ENCODE measurements at regions of chr17 and their contacts with region 1.

Region 1: GRCh38 chr17:80866147-80866793 is 125.4 kb upstream of the CHMP6 start:
- DNase-seq: peak; percentile 36 to 77 (median 62)
- ATAC-seq: peak; percentile 64
- H3K4me3 ChIP-seq: no peak overlapping the region
- H3K4me3 Mint-ChIP-seq: no peak overlapping the region
- H3K27ac ChIP-seq: no peak overlapping the region
- H3K27ac Mint-ChIP-seq: peak overlapping the region; percentile 51
- H3K4me1 ChIP-seq: peaks cover 28% of the 10 kb centered on the region
- H3K4me1 Mint-ChIP-seq: peaks cover 66% of the 10 kb centered on the region
- H3K27me3 ChIP-seq: no peaks in the 10 kb centered on the region
- H3K27me3 Mint-ChIP-seq: no peaks in the 10 kb centered on the region
- CTCF ChIP-seq: peak; percentile 73

Region 2: GRCh38 chr17:80805032-80805751 is 61.1 kb before region 1 on chr17:
- CTCF ChIA-PET with region 1: no interaction called
- POLR2A ChIA-PET with region 1: no interaction called
- intact Hi-C with region 1: no loop called
- DNase-seq: peak in 1 of 14 experiments; percentile 24
- ATAC-seq: no peak
- H3K4me3 ChIP-seq: no peak overlapping the region
- H3K4me3 Mint-ChIP-seq: no peak overlapping the region
- H3K27ac ChIP-seq: no peak overlapping the region
- H3K27ac Mint-ChIP-seq: no peak overlapping the region
- H3K4me1 ChIP-seq: no peaks in the 10 kb centered on the region
- H3K4me1 Mint-ChIP-seq: peaks cover 11% of the 10 kb centered on the region
- H3K27me3 ChIP-seq: no peaks in the 10 kb centered on the region
- H3K27me3 Mint-ChIP-seq: no peaks in the 10 kb centered on the region
- CTCF ChIP-seq: no peak

Region 3: DNA sequence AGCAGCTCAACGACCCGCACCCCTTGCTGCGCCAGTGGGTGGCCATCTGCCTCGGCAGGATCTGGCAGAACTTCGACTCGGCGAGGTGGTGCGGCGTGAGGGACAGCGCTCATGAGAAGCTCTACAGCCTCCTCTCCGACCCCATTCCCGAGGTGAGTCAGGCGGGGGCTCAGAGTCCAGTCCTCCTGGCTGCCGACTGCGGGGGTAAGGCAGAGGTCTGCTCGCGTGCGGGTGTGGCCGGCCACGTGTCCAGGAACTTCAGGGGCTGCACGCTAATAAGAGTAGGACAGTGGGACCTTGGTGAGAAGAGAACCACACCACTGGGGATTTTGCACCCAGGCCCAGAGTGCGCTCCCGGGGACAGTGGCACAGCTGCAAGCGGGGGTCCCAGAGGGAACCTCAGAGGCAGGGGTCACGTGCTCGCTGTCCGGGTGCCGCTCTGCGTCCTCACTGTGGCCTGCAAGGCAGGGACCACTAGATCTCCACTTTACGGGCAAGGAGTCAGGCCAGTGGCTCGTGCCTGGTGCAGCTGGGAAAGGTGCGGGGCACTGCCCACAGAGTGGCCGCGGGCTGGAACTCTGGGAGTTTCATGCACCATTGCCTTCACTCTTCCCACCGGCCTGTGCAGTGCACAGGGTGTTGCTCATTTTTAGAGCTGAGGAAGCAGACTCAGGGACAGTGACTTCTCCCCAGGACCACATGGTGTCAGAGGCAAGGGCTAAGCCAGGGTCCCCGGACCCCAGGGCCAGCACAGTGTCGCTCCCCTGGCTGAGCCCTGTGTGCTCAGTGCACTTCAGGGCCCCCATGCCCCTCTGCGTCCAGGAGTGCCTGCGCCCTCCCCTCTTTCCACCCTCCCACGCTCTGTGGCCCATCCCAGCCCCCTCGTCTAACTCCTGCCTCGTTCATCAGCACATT is 17.8 kb after region 1 on chr17:
- CTCF ChIA-PET with region 1: no interaction called
- POLR2A ChIA-PET with region 1: no interaction called
- intact Hi-C with region 1: loop called in 1 of 2 experiments (anchors 2 kb)
- DNase-seq: no peak
- ATAC-seq: no peak
- H3K4me3 ChIP-seq: no peak overlapping the region
- H3K4me3 Mint-ChIP-seq: no peak overlapping the region
- H3K27ac ChIP-seq: no peak overlapping the region
- H3K27ac Mint-ChIP-seq: no peak overlapping the region
- H3K4me1 ChIP-seq: peaks cover 7% of the 10 kb centered on the region
- H3K4me1 Mint-ChIP-seq: peaks cover 4% of the 10 kb centered on the region
- H3K27me3 ChIP-seq: no peaks in the 10 kb centered on the region
- H3K27me3 Mint-ChIP-seq: no peaks in the 10 kb centered on the region
- CTCF ChIP-seq: no peak

Region 4: DNA sequence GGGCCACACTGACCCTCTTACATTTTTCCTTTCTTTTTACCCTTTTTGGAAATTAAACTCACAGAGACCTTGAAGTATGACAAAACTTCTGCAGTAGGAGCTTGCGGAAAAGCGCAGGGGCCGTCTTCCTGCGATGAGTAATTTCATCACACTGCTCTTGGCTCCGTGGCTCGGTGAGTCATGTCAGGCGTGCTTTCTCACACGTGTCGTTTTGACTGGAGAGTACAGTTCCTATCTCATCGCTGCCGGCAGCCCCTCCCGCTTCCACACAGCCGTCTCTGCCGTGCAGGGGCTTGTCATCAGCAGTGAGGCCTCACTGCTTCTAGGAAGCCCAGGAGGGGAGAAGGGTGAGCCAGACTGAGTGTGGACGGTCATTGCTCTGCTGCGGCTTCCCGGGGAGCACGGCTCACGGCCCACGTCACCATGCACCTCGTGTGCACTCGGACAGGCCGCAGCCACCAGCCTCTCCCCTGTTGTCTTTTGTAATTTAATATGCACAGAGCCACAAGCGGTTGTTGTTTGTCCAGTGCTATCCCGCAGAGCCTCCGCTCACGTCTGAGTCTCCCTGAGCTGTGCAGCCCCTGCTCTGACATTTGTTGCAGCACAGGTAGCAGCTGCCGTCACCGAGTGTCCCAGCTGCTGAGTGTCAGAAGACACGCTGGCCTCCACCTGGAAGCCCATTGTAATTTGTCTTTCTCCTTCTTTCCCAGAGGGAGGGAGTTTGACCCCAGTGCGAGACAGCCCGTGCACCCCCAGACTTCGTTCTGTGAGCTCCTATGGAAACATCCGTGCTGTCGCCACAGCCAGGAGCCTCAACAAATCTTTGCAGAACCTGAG is 26.0 kb after region 1 on chr17:
- CTCF ChIA-PET with region 1: interaction called, 14 read pairs
- POLR2A ChIA-PET with region 1: no interaction called
- intact Hi-C with region 1: no loop called
- DNase-seq: peak; percentile 61 to 92 (median 80)
- ATAC-seq: peak; percentile 77
- H3K4me3 ChIP-seq: peak overlapping the region; percentile 37
- H3K4me3 Mint-ChIP-seq: peak overlapping the region; percentile 75
- H3K27ac ChIP-seq: peak overlapping the region; percentile 80 to 82
- H3K27ac Mint-ChIP-seq: peak overlapping the region; percentile 93
- H3K4me1 ChIP-seq: peaks cover 63% of the 10 kb centered on the region
- H3K4me1 Mint-ChIP-seq: peaks cover 50% of the 10 kb centered on the region
- H3K27me3 ChIP-seq: no peaks in the 10 kb centered on the region
- H3K27me3 Mint-ChIP-seq: no peaks in the 10 kb centered on the region
- CTCF ChIP-seq: no peak

Region 5: DNA sequence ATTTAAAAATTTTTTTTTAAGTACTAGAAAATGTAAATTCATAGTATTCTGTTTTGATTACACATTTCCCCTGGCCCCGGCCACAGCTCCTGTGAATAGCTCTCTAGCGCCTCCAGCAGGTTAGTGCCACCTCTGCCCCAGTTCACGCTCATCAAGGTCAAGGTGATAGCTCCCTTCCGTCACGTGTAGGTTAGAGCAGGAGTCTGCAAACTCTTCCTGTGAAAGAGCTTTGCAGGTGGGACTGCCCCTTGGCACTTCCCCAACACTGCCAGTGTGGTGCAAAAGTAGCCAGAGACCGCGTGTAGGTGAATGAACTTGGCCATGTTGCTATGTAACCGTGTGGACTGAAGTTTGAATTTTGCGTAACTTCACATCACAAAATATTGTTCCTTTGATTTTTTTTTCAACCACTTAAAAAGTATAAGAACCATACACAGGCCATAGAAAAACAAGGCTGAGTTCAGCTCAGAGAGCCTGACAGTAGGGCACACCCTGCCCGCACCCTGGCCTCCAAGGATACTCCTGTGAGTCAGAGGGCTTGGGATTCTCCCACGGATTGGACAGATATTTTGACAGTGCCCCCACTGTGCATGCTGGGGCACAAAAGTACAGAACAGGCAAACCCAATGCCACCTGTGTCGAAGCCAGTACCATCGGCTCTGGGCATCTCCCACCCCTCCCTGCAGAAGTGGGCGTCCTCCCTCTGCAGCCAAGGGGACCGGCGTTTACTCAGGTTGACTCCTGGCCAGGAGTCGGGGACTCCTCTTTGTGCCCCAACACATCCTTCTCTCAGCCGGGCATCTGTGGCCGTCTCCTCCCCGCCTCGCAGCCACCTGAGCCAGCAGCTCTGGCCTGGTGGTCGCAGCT is 33.4 kb after region 1 on chr17:
- CTCF ChIA-PET with region 1: interaction called, 13 read pairs
- POLR2A ChIA-PET with region 1: interaction called, 5 read pairs
- intact Hi-C with region 1: loop called (anchors 1 to 2 kb)
- DNase-seq: peak; percentile 70 to 89 (median 78)
- ATAC-seq: peak; percentile 95
- H3K4me3 ChIP-seq: no peak overlapping the region
- H3K4me3 Mint-ChIP-seq: no peak overlapping the region
- H3K27ac ChIP-seq: no peak overlapping the region
- H3K27ac Mint-ChIP-seq: peak overlapping the region; percentile 47
- H3K4me1 ChIP-seq: peaks cover 22% of the 10 kb centered on the region
- H3K4me1 Mint-ChIP-seq: peaks cover 30% of the 10 kb centered on the region
- H3K27me3 ChIP-seq: no peaks in the 10 kb centered on the region
- H3K27me3 Mint-ChIP-seq: no peaks in the 10 kb centered on the region
- CTCF ChIP-seq: peak; percentile 87

Region 6: DNA sequence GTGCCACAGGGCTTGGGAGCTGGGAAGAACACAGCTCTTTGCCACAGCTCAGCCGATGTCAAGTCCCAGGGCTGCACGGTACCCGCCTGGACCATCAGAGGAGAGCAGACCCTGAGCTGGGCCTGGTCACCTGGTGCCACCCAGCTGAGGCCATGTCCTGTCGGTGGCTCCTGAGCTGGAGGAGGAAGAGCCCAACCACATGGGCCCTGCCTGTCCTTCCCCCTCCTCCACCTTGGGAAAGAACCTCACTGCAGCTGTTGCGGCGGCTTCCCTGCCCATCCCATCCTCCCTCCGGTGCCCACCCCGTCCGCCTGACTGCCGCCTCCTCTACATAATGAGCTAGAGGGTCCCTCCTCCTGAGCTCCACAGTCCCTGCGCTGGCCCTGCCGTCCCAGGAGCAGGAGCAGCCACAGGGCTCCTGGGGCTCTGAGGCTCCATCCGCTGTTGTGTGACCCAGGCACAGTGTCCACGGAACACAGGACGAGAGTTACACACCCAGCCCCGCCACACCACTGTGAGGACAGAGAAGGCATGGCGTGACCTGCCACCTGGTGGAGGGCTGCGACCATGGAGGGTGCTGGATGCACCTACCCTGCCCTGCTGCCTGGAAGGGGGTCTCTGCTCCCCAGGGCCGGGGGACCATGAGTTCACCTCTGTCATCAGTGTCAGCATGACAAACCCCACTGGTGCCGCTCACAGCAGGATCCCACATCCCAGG is 103.9 kb after region 1 on chr17:
- CTCF ChIA-PET with region 1: no interaction called
- POLR2A ChIA-PET with region 1: no interaction called
- intact Hi-C with region 1: loop called in 1 of 2 experiments (anchors 5 kb)
- DNase-seq: peak in 13 of 14 experiments; percentile 28 to 66 (median 44)
- ATAC-seq: peak; percentile 82
- H3K4me3 ChIP-seq: no peak overlapping the region
- H3K4me3 Mint-ChIP-seq: no peak overlapping the region
- H3K27ac ChIP-seq: no peak overlapping the region
- H3K27ac Mint-ChIP-seq: no peak overlapping the region
- H3K4me1 ChIP-seq: peaks cover 23% of the 10 kb centered on the region
- H3K4me1 Mint-ChIP-seq: peaks cover 6% of the 10 kb centered on the region
- H3K27me3 ChIP-seq: no peaks in the 10 kb centered on the region
- H3K27me3 Mint-ChIP-seq: no peaks in the 10 kb centered on the region
- CTCF ChIP-seq: peak; percentile 47